ENCODE measurements at regions of chr1 and their contacts with region 1.

Region 1: DNA sequence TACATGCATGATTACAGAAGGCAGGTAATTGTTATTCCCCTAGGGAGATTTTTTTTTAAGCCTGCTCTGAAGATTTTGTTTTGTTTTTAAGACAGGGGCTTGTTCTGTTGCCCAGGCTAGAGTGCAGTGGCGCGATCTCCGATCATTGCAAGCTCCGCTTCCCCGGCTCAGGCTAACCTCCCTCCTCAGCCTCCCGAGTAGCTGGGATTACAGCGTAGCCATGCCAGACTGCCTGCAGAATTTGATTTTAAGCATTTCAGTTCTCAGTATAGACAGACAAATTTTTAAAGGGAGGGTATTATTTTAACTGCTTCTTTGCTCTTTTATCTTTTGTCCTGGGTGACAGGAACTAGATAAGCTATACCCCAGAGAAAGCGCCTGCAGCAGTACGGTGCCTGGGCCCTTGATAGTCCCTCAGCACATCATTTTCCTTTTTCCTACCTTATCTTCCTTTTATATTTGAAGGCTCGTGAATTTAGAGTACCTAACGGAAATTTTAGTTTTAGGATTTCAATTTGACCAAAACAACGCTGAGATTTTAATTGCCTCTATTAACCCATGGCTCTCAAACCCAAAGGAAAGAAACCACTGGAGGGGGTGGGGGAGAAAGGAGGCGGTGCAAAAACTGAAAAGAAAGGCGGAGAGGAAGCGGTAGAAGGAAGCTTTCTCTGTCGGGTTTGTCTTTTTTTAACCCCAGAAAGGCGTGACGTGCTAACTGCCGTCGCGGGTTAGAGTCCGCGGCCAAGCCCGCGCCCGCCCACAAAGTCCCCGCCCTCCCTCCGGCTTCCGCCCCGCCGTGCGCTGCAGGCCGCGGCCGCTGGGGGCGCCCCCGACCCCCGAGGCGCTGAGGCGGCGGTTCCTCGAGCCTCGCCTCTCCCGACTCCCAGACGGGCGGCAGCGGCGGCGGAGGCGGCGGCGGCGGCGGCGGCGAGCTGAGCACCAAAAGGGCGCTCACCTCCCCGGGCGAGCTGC is at the start of gene EEIG2:
- DNase-seq: peak; percentile 85 to 96 (median 90)
- ATAC-seq: peak; percentile 90
- H3K4me3 ChIP-seq: peak within 1 kb of the TSS; percentile 77
- H3K4me3 Mint-ChIP-seq: peak within 1 kb of the TSS; percentile 99
- H3K27ac ChIP-seq: peak within 1 kb of the TSS; percentile 57
- H3K27ac Mint-ChIP-seq: peak within 1 kb of the TSS; percentile 88
- H3K4me1 ChIP-seq: peaks cover 30% of the 10 kb centered on the region
- H3K4me1 Mint-ChIP-seq: peaks cover 47% of the 10 kb centered on the region
- H3K27me3 ChIP-seq: no peaks in the 10 kb centered on the region
- H3K27me3 Mint-ChIP-seq: no peaks in the 10 kb centered on the region
- CTCF ChIP-seq: peak; percentile 56
- total RNA-seq, gene EEIG2: 11.6 to 12.2 TPM

Region 2: DNA sequence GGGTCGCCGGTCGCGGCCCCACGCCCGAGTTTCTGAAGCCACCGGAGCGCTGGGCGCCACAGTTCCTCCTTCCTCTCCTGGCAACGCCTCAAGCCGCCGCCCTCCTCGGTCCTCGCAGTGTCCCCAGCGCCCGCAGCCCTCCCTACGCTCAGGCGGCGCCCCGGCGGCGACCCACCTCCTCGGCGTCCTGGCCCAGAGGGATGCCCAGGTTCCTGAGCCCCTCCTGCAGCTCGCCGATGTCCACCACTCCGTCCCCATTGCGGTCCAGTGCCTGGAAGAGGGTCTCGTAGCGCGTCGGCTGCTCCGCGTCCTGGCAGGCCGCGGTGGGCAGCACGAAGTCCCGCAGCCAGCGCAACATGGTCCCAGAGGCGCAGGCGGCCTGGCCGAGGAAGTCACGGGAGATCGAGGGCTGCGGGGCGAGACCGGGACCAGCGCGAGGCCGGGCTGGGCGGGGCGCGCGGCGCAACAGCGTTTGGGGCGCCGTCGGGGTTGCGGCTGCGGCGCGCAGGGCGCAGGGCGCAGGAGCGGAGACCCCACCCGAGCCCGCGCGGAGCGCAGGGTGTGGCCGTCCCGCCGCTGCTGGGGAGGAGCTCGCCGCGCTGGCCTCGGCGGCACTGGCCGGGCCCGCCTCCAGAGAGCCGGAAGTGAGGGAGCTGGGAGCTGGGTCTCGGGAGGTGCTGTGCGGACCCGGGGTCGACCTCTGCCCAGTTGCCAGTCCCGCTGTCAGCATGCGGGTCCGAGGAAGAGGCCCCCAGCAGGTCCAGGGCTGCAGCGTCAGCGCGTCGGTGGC is 359.5 kb before region 1 on chr1 and contains the start of gene SLC25A24:
- CTCF ChIA-PET with region 1: no interaction called
- POLR2A ChIA-PET with region 1: interaction called, 14 read pairs
- intact Hi-C with region 1: no loop called
- DNase-seq: peak; percentile 51 to 89 (median 69)
- ATAC-seq: peak; percentile 92
- H3K4me3 ChIP-seq: peak within 1 kb of the TSS; percentile 97
- H3K4me3 Mint-ChIP-seq: peak within 1 kb of the TSS; percentile 94
- H3K27ac ChIP-seq: peak within 1 kb of the TSS; percentile 42 to 79
- H3K27ac Mint-ChIP-seq: peak within 1 kb of the TSS; percentile 83
- H3K4me1 ChIP-seq: peaks cover 16% of the 10 kb centered on the region
- H3K4me1 Mint-ChIP-seq: peaks cover 34% of the 10 kb centered on the region
- H3K27me3 ChIP-seq: no peaks in the 10 kb centered on the region
- H3K27me3 Mint-ChIP-seq: no peaks in the 10 kb centered on the region
- CTCF ChIP-seq: no peak
- total RNA-seq, gene SLC25A24: 4.9 to 5.5 TPM

Region 3: DNA sequence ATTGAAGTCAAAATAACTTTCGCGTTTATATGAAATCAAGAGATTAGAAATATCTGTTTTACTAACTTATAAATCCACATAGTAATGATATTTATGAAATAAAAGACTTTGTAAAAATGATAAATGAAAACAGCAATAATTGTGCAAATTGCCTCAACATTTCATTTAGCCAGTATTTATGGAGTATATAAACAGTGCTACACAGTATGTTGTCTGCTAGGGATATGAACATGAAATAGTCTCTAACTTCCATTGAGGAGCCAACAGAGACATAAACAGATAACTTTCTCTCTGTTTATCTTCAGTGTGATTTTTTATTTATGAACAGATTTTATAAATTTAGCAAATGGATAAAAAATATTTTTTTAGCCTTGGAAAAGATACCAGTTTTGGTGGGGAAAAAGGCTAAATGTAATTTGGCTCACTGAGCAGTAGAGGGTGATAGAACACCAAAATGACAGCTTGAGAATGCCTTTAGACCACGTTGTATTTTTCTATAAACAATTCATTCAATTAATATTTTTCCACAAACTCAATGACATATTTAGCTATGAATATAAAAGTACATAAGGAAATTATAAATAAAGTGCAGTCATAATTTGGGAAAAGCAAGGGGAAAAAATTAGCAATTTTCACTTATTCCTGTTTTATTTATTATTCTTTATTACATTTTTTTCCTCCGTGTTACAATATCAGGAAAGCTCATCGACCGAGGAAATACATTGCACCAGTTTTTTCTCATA is 47.1 kb before region 1 on chr1:
- CTCF ChIA-PET with region 1: interaction called, 49 read pairs
- POLR2A ChIA-PET with region 1: interaction called, 32 read pairs
- intact Hi-C with region 1: loop called (anchors 1 kb)
- DNase-seq: peak in 4 of 14 experiments; percentile 6 to 75 (median 69)
- ATAC-seq: peak; percentile 77
- H3K4me3 ChIP-seq: no peak overlapping the region
- H3K4me3 Mint-ChIP-seq: no peak overlapping the region
- H3K27ac ChIP-seq: no peak overlapping the region
- H3K27ac Mint-ChIP-seq: no peak overlapping the region
- H3K4me1 ChIP-seq: no peaks in the 10 kb centered on the region
- H3K4me1 Mint-ChIP-seq: no peaks in the 10 kb centered on the region
- H3K27me3 ChIP-seq: peaks cover 0 to 10% of the 10 kb centered on the region in 2 experiments
- H3K27me3 Mint-ChIP-seq: peaks cover 13% of the 10 kb centered on the region
- CTCF ChIP-seq: peak; percentile 99

Region 4: DNA sequence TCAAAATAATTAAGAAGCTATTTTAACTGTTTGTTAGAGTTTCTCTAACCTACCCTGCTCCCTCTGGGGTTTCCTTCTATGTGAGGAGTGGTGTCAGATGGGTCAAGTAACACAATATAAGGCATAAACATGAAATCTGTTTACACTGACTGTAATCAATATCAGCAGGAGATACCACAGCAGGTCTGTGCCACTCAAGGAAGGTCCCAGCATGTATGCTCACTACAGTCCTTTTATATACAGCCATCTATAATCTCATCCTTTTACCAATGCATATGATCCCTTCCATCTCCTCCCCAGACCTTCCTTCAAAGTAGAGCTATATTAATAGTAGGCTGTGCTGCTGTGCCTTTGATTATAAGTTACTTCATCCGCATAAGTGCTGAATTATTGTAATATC is 25.8 kb after region 1 on chr1:
- CTCF ChIA-PET with region 1: interaction called, 34 read pairs
- POLR2A ChIA-PET with region 1: interaction called, 3 read pairs
- intact Hi-C with region 1: no loop called
- DNase-seq: no peak
- ATAC-seq: no peak
- H3K4me3 ChIP-seq: no peak overlapping the region
- H3K4me3 Mint-ChIP-seq: no peak overlapping the region
- H3K27ac ChIP-seq: no peak overlapping the region
- H3K27ac Mint-ChIP-seq: peak overlapping the region; percentile 16
- H3K4me1 ChIP-seq: peaks cover 6% of the 10 kb centered on the region
- H3K4me1 Mint-ChIP-seq: peaks cover 60% of the 10 kb centered on the region
- H3K27me3 ChIP-seq: no peaks in the 10 kb centered on the region
- H3K27me3 Mint-ChIP-seq: no peaks in the 10 kb centered on the region
- CTCF ChIP-seq: no peak

Region 5: DNA sequence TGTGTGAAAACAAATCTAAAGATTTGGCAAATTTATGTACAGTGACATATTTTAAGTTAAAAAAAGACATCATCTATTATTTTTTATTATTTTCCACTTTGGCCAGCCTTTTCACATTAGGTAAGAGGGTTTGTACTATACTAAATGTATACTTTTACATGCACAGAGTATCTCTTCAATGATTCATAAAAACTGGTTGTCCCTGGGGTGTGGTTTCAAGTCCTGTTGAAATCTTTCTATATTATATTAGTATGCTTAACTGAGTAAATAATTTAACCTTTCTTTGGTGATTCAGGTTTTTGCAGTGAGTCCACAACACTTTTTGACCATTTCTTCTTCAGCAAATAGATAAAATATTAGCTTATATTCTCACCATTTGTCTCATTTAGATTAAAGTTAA is 46.1 kb after region 1 on chr1:
- CTCF ChIA-PET with region 1: interaction called, 12 read pairs
- POLR2A ChIA-PET with region 1: no interaction called
- intact Hi-C with region 1: no loop called
- DNase-seq: no peak
- ATAC-seq: no peak
- H3K4me3 ChIP-seq: no peak overlapping the region
- H3K4me3 Mint-ChIP-seq: no peak overlapping the region
- H3K27ac ChIP-seq: no peak overlapping the region
- H3K27ac Mint-ChIP-seq: no peak overlapping the region
- H3K4me1 ChIP-seq: no peaks in the 10 kb centered on the region
- H3K4me1 Mint-ChIP-seq: no peaks in the 10 kb centered on the region
- H3K27me3 ChIP-seq: no peaks in the 10 kb centered on the region
- H3K27me3 Mint-ChIP-seq: no peaks in the 10 kb centered on the region
- CTCF ChIP-seq: no peak

Region 6: DNA sequence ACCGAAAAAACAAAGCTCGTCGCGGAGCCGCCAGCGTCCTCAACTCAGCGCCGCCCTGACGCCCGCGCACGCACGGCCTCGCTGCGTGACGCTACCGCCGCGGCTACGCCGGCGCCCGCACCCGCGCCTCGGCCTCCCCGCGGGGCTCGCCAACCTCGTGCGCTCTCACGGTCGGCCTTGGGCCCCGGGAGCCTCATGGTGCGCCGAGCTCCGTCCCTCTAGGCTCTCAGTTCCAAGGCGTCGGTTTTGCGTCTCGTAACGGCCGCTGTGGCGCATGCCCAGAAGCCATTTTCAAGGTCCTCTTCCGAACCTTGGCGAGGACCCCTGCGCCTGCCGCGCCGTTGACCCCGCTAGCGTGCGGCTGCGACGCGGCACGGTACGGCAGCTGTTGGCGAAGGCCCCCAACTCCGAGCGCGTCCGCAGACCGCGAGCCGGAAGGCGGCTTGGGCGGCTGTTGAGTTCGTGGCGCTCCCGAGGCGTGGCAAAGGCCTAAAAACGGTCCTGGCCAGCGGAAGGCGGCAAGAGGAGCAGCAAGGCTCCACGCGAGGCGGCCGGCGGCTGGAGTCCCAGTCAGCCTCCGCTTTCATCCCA is 101.6 kb after region 1 on chr1 and contains the start of gene HENMT1:
- CTCF ChIA-PET with region 1: interaction called, 3 read pairs
- POLR2A ChIA-PET with region 1: interaction called, 38 read pairs
- intact Hi-C with region 1: no loop called
- DNase-seq: peak; percentile 65 to 95 (median 76)
- ATAC-seq: peak; percentile 88
- H3K4me3 ChIP-seq: peak within 1 kb of the TSS; percentile 65
- H3K4me3 Mint-ChIP-seq: peak within 1 kb of the TSS; percentile 82
- H3K27ac ChIP-seq: peak within 1 kb of the TSS; percentile 95 to 96
- H3K27ac Mint-ChIP-seq: peak within 1 kb of the TSS; percentile 99
- H3K4me1 ChIP-seq: peaks cover 12% of the 10 kb centered on the region
- H3K4me1 Mint-ChIP-seq: peaks cover 43% of the 10 kb centered on the region
- H3K27me3 ChIP-seq: no peaks in the 10 kb centered on the region
- H3K27me3 Mint-ChIP-seq: no peaks in the 10 kb centered on the region
- CTCF ChIP-seq: no peak
- total RNA-seq, gene HENMT1: 6.3 to 8.2 TPM

Region 7: DNA sequence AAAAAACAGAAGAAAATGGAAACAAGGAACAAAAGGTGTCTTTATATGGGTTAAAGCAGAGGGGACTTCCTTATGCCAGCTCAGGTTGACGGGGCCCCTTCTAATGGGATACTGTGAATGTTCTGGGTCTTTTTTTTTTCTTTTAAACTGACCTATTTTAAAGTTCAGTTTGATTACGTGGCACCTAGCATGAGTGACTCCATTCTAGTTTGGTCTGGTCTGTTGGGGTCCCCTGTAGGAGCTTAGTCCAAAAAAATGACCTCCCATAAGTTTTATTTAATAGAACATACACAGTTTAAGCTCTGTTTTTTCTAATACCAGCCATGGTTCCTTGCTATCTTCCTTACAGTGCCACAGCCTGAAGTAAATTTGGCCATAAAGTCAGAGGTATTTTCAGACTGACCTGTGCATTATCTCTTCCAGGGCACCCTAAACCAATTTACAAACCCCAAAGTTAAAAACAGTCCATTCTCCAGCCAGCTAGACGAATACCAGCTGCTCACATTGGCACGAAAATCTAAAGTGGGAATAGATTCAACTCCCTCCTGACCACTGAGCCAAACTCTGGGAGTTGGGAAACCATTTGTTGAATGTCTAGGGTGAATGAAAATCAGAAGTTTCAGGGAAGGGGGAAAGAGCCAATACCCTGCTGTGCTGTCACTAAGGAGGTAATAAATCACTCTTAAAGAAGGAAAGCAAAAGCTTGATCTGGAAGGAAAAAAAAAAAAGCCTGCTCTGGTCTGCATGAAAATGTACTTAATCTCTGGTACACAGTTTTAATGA is 255.0 kb after region 1 on chr1:
- CTCF ChIA-PET with region 1: no interaction called
- POLR2A ChIA-PET with region 1: no interaction called
- intact Hi-C with region 1: no loop called
- DNase-seq: no peak
- ATAC-seq: no peak
- H3K4me3 ChIP-seq: no peak overlapping the region
- H3K4me3 Mint-ChIP-seq: no peak overlapping the region
- H3K27ac ChIP-seq: no peak overlapping the region
- H3K27ac Mint-ChIP-seq: no peak overlapping the region
- H3K4me1 ChIP-seq: no peaks in the 10 kb centered on the region
- H3K4me1 Mint-ChIP-seq: no peaks in the 10 kb centered on the region
- H3K27me3 ChIP-seq: no peaks in the 10 kb centered on the region
- H3K27me3 Mint-ChIP-seq: no peaks in the 10 kb centered on the region
- CTCF ChIP-seq: no peak

Region 8: GRCh38 chr1:108877348-108878159 is 318.1 kb after region 1 on chr1:
- CTCF ChIA-PET with region 1: no interaction called
- POLR2A ChIA-PET with region 1: no interaction called
- intact Hi-C with region 1: loop called in 1 of 2 experiments (anchors 10 kb)
- DNase-seq: peak in 1 of 14 experiments; percentile 6
- ATAC-seq: no peak
- H3K4me3 ChIP-seq: peak overlapping the region; percentile 75
- H3K4me3 Mint-ChIP-seq: peak overlapping the region; percentile 95
- H3K27ac ChIP-seq: no peak overlapping the region
- H3K27ac Mint-ChIP-seq: peak overlapping the region; percentile 1
- H3K4me1 ChIP-seq: peaks cover 16% of the 10 kb centered on the region
- H3K4me1 Mint-ChIP-seq: peaks cover 10% of the 10 kb centered on the region
- H3K27me3 ChIP-seq: peaks cover 0 to 6% of the 10 kb centered on the region in 2 experiments
- H3K27me3 Mint-ChIP-seq: no peaks in the 10 kb centered on the region
- CTCF ChIP-seq: no peak

Region 9: DNA sequence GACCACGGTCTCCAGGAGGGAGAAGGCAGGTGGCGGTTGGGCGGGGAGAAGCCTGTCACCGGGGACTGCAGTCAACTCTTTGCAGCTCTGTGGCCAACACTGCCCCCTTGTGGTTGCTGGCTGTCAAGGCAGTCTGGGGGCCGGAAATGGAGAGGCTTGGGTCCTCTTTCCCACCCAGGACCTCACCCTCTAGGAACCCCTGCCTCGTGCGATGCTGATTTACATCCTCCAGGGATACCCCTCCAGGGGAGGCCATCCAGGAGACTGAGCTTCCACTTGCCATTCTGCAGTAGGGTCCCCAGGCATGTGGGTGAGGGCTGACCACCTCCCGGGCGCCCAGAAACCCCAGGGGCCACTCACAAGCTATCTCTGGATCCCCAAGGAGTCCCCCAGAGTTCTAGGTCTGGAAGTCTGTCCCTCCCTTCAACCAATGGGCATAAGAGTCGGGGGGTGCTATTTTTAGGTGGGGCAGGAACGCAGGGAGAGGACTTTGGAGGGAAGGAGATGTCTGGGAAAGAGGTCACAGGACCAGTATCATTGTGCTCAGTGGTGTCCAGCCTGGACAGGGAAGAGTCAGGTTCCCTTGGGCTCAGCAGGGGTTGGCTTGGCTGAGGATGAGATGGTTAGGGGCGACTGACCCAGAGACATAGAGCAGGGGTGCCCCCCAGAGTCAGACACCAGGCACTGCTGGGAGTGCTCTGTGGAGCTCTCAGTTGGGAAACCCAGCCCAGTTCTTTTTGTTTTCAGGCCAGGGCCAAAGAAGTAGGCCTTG is 973.0 kb after region 1 on chr1:
- CTCF ChIA-PET with region 1: no interaction called
- POLR2A ChIA-PET with region 1: no interaction called
- intact Hi-C with region 1: no loop called
- DNase-seq: peak; percentile 83 to 95 (median 92)
- ATAC-seq: peak; percentile 92
- H3K4me3 ChIP-seq: peak overlapping the region; percentile 37
- H3K4me3 Mint-ChIP-seq: peak overlapping the region; percentile 84
- H3K27ac ChIP-seq: no peak overlapping the region
- H3K27ac Mint-ChIP-seq: peak overlapping the region; percentile 29
- H3K4me1 ChIP-seq: peaks cover 35% of the 10 kb centered on the region
- H3K4me1 Mint-ChIP-seq: peaks cover 35% of the 10 kb centered on the region
- H3K27me3 ChIP-seq: no peaks in the 10 kb centered on the region
- H3K27me3 Mint-ChIP-seq: no peaks in the 10 kb centered on the region
- CTCF ChIP-seq: peak; percentile 78

Measured in CD4-positive, alpha-beta T cell (primary cell).